ENCODE measurements at regions of chr10 and their contacts with region 1.

Region 1: DNA sequence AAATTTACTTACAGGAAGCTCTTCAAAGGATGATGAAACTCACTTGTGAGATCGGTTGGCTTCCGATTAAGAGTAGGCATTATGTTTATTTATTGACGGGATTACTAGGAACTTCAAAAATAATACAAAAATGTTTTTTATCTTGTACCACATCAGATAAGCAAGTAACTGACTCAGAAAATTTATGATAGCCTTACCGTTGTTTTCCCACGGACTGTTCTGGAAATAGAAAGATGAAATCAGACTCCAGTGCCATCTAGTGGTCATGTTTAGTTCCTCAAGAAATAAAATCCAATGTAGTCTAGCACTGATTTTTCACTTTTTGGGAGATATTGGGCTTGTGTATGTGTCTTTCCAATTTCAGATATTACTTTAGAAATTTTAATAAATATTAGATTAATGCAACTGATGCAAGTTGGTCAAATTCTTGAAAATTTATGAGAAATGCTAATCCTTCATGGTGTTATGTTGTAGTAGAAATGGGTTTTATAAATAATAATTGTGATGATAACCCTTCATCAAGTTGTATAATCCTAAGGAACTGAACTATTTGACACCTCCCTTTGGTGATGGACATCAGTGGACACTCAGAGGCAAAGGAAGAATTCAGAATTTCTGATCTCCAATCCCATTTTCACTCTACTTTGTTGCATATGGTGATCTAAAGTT is 168.8 kb downstream of the TMEM26 start:
- DNase-seq: no peak
- ATAC-seq: peak; percentile 85
- H3K4me3 ChIP-seq: peak overlapping the region in 1 of 2 donors; percentile 48
- H3K27ac ChIP-seq: no peak overlapping the region
- H3K4me1 ChIP-seq: no peaks in the 10 kb centered on the region
- H3K27me3 ChIP-seq: no peaks in the 10 kb centered on the region

Region 2: DNA sequence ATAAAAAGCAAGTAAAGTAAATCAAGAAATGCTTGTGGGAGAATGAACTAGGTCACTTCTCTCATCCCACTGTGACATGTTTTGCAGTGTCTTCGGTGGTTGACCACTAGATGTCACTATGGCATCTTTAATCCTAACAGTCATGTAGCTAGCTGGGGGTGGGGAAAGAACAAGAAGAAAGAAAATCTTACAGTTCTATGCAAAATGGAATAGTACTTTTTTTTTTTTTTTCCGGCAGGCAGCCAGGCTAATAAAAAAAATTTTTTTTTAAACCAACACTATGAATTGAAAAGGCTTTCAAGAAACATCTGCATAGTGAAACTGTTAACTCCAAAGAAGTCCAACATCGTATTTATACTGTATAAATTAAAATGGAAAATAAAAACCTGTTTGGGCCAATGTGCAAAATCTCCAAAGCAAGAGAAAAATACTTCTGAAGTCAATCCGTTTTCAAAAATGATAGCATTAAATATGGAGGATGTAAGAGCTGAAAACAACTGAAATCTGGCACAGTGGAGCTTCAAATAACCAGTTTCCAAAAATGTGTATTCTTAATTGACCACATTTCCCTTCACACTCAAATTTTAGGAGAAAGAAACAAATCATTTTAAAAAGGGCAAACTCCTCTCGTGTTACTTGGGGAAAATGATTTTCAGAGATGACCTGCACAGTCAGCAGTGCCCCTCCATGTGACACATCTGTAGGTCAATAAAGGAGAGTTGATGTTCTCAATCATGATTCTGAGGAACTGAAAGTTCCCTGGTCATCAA is 467.5 kb before region 1 on chr10:
- intact Hi-C with region 1: loop called (anchors 2 kb)
- DNase-seq: no peak
- ATAC-seq: peak; percentile 92
- H3K4me3 ChIP-seq: no peak overlapping the region
- H3K27ac ChIP-seq: no peak overlapping the region
- H3K4me1 ChIP-seq: peaks cover 0 to 4% of the 10 kb centered on the region in 2 donors
- H3K27me3 ChIP-seq: no peaks in the 10 kb centered on the region

Region 3: DNA sequence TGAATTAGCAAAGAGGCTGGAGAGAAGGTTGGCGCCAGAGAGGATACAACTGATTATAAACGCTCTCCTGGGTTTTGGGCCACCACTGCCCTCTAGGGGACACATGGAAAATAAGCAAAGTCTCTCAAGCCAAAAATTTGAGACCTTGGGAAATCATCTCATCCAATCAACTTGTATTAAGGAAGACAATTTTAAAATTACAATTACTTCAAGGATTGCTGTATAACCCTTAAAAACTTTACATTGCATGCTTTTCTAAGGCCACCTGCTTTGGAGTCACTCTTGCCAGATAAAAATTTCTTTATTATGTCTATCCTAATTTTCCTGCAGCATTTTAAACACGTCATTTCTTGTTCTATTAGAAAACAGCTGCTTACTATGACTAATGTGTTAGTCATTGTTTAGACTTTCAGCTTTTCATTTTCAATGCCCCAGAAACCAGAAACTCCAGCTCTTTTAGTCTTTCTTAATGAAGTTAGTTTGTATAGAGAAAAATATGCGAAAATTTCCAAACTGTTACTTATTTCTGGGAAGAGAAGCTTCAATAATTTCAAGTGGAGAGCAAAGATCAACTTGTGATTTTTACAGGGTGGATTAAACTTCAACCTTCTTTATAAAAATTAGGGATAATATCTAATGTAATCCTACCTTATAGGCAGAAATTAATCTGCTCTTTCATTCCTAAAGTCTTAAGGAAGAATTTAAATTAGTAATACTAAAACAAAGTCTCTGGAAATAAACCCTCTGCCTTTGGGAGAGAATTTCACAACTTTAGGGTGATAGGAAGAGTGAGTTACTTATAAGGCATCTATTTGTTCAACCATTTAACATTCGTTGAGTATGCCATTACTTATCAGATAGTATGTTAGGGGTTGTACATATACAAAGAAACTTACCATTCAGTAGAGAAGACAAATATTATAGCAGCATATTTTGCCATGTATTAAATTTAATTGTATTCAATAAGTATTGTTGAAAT is 319.8 kb before region 1 on chr10:
- intact Hi-C with region 1: loop called in 1 of 2 experiments (anchors 10 kb)
- DNase-seq: peak in 1 of 2 donors; percentile 70
- ATAC-seq: peak; percentile 89
- H3K4me3 ChIP-seq: no peak overlapping the region
- H3K27ac ChIP-seq: no peak overlapping the region
- H3K4me1 ChIP-seq: no peaks in the 10 kb centered on the region
- H3K27me3 ChIP-seq: no peaks in the 10 kb centered on the region

Region 4: GRCh38 chr10:61140765-61141392 is 143.5 kb before region 1 on chr10:
- intact Hi-C with region 1: loop called in 1 of 2 experiments (anchors 5 kb)
- DNase-seq: no peak
- ATAC-seq: peak; percentile 69
- H3K4me3 ChIP-seq: no peak overlapping the region
- H3K27ac ChIP-seq: no peak overlapping the region
- H3K4me1 ChIP-seq: no peaks in the 10 kb centered on the region
- H3K27me3 ChIP-seq: no peaks in the 10 kb centered on the region

Region 5: DNA sequence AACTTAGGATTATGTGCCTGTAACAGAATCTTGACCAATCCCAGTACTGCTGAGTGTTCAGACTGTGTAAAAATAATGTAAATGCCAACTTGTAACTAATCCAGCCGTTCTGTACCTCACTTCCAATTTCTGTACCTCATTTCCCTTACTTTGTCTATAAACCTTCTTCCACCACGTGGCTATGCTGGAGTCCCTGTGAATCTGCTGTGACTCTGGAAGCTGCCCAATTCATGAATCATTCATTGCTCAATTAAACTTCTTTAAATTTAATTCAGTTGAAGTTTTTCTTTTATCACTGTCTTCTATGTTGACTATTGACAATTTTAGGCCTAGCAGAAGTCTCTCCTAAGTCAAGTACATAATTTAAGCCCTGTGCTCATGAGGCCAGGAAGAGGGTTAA is 125.1 kb before region 1 on chr10:
- intact Hi-C with region 1: loop called in 1 of 2 experiments (anchors 5 kb)
- DNase-seq: no peak
- ATAC-seq: no peak
- H3K4me3 ChIP-seq: no peak overlapping the region
- H3K27ac ChIP-seq: no peak overlapping the region
- H3K4me1 ChIP-seq: peaks cover 0 to 4% of the 10 kb centered on the region in 2 donors
- H3K27me3 ChIP-seq: no peaks in the 10 kb centered on the region

Measured in aorta (tissue), 5 donors.